ENCODE measurements at regions of chr1 and their contacts with region 1.

Region 1: GRCh38 chr1:111755331-111756123 is at the start of gene DDX20:
- DNase-seq: peak; percentile 93 to 96 (median 95)
- ATAC-seq: peak; percentile 97 to 98 (median 98)
- H3K4me3 ChIP-seq: peak within 1 kb of the TSS; percentile 69 to 91 (median 80)
- H3K27ac ChIP-seq: peak within 1 kb of the TSS; percentile 86 to 96 (median 91)
- H3K4me1 ChIP-seq: peaks cover 0 to 38% (median 17%) of the 10 kb centered on the region in 12 donors
- H3K27me3 ChIP-seq: no peaks in the 10 kb centered on the region
- CTCF ChIP-seq: peak; percentile 81 to 100 (median 95)
- POLR2A ChIP-seq: no peak
- total RNA-seq, gene DDX20: 5.7 to 12.9 (median 7.4) TPM

Region 2: GRCh38 chr1:111656086-111657017 is 99.2 kb before region 1 on chr1:
- intact Hi-C with region 1: loop called in 1 of 10 experiments (anchors 5 kb)
- DNase-seq: no peak
- ATAC-seq: peak; percentile 19 to 73 (median 56)
- H3K4me3 ChIP-seq: no peak overlapping the region
- H3K27ac ChIP-seq: peak overlapping the region in 2 of 12 donors; percentile 3 to 40
- H3K4me1 ChIP-seq: peaks cover 0 to 67% (median 25%) of the 10 kb centered on the region in 12 donors
- H3K27me3 ChIP-seq: no peaks in the 10 kb centered on the region
- CTCF ChIP-seq: peak; percentile 42 to 82 (median 68)
- POLR2A ChIP-seq: no peak

Region 3: GRCh38 chr1:111720977-111721786 is 34.3 kb before region 1 on chr1:
- intact Hi-C with region 1: loop called in 1 of 10 experiments (anchors 5 kb)
- DNase-seq: peak in 1 of 5 donors; percentile 51
- ATAC-seq: peak in 2 of 4 donors; percentile 5
- H3K4me3 ChIP-seq: no peak overlapping the region
- H3K27ac ChIP-seq: peak overlapping the region; percentile 74 to 95 (median 91)
- H3K4me1 ChIP-seq: peaks cover 13 to 74% (median 53%) of the 10 kb centered on the region in 12 donors
- H3K27me3 ChIP-seq: no peaks in the 10 kb centered on the region
- CTCF ChIP-seq: no peak
- POLR2A ChIP-seq: no peak

Region 4: DNA sequence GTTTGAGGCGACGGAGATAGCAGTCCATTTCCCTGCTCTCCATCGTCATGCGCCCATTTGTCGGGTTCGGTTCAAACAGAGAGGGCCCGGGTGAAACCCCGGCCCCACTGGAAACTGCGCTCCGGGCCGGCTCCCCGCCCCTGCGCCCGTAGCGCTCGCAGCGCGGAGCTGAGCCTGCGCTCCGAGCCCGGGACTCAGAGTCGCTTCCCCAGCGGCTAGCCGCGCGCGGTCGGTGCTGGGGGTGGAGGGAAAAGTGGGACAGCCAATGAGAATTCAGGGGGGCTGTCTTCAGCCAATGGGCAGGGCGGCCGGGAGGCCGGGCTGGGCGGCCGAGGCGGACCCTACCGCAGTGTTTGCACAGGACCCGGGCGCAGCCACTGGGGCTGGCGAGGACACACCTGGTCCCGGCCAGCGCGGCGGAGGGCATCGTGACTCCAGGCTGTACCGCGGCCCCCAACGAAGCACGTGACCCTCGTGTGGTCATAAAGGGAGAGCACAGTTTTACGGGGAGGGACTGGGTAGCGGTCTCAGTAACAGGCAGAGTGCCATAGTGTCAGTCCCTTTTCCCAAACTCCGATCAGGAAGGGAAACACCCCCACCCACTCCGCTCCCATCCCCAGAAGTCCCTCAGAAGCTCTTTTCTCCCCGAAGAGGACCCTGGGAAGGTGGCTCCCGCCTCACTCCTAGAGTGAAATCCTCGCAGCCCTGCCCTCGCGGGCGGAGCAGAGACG is 16.2 kb before region 1 on chr1 and contains the start of gene INKA2:
- intact Hi-C with region 1: loop called in 2 of 10 experiments (anchors 1 kb)
- DNase-seq: peak; percentile 93 to 96 (median 95)
- ATAC-seq: peak; percentile 84 to 88 (median 87)
- H3K4me3 ChIP-seq: peak within 1 kb of the TSS; percentile 61 to 95 (median 80)
- H3K27ac ChIP-seq: peak within 1 kb of the TSS; percentile 92 to 100 (median 98)
- H3K4me1 ChIP-seq: peaks cover 13 to 77% (median 59%) of the 10 kb centered on the region in 12 donors
- H3K27me3 ChIP-seq: peaks cover 0 to 8% (median 0%) of the 10 kb centered on the region in 9 donors
- CTCF ChIP-seq: peak in 1 of 12 donors; percentile 10
- POLR2A ChIP-seq: peak; percentile 8 to 93
- total RNA-seq, gene INKA2: 10.1 to 33.2 (median 14.0) TPM